WTC11 (cell line): ENCODE measurements at regions of chr2 and their contacts with region 1.

Region 1: DNA sequence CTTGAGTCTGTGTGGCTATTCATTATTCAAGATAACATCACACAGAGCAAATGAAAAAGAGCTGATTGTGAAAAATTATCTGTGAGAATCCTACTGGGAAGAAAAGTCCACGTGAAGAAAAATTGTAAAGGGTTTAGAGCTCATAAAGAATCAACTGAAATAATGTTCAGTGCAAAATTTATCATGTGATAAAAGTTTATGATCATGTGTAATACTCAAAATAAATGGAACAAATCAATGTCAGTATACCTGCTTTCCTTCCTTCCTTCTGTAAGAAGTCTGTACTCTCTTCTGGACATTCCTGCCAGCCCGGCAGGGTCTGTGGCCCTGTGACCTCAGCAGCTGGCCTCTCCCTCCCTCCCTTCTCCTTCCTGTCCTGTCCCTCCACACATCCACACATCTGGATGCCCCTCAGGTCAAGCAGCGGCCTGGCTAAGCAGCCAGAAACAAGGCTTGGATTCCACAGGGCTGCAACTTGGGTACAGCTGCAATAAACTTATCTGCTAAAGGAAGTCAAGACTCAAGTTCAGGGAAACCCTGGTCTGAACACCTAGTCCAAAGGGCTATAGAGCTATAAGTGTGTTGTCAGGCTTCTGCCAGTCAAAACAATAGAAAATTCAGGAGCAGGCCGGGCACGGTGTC is 172.1 kb downstream of the MREG start:
- DNase-seq: no peak
- ATAC-seq: no peak
- H3K4me3 Mint-ChIP-seq: no peak overlapping the region
- H3K27ac Mint-ChIP-seq: no peak overlapping the region
- H3K4me1 Mint-ChIP-seq: peaks cover 6% of the 10 kb centered on the region
- H3K27me3 Mint-ChIP-seq: no peaks in the 10 kb centered on the region
- CTCF ChIP-seq: no peak

Region 2: DNA sequence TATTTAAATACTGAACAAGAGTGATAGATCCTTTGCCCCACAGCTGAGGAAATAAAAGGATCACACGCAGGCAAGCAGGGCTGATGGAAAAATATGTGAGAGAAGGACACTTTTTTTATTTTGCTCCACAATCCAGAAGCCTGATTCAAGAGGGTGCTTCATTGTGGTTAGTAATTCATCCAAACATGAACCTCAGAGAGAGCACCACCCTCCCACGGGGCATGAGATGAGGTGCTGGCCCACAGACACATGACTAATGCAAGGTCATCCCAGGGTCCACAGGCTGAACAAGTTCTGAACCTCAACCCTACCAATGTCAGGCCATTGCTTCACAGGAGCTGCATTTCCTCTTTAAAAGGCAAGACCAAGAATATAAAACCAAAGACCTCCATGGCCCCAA is 67.6 kb before region 1 on chr2:
- CTCF ChIA-PET with region 1: no interaction called
- POLR2A ChIA-PET with region 1: no interaction called
- DNase-seq: no peak
- ATAC-seq: no peak
- H3K4me3 Mint-ChIP-seq: no peak overlapping the region
- H3K27ac Mint-ChIP-seq: no peak overlapping the region
- H3K4me1 Mint-ChIP-seq: peaks cover 26% of the 10 kb centered on the region
- H3K27me3 Mint-ChIP-seq: peaks cover 6% of the 10 kb centered on the region
- CTCF ChIP-seq: no peak

Region 3: DNA sequence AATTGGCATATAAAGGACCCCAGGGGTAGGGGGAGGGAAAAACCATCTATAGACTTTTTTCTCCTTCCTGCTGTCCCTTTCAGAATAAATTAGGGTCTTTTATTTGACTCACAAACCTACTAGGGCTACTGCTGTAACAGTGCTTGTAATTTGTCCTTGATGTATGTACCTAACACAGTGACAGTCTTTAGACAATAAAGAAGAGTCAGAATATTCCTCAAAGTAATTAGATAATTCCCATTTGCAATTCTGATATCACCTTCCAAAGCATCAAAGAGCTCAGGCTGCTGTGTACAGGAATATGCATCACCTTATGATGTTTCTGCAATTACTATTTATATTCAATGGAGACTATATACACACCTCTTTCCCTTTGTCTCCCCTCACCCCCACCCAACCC is 10.4 kb after region 1 on chr2:
- CTCF ChIA-PET with region 1: no interaction called
- POLR2A ChIA-PET with region 1: no interaction called
- DNase-seq: no peak
- ATAC-seq: no peak
- H3K4me3 Mint-ChIP-seq: no peak overlapping the region
- H3K27ac Mint-ChIP-seq: no peak overlapping the region
- H3K4me1 Mint-ChIP-seq: peaks cover 14% of the 10 kb centered on the region
- H3K27me3 Mint-ChIP-seq: no peaks in the 10 kb centered on the region; the same call in 1 of the 2 replicates
- CTCF ChIP-seq: no peak

Region 4: GRCh38 chr2:215870986-215871385 is 29.7 kb after region 1 on chr2:
- CTCF ChIA-PET with region 1: interaction called, 10 read pairs
- POLR2A ChIA-PET with region 1: no interaction called
- DNase-seq: peak; percentile 65
- ATAC-seq: peak; percentile 98
- H3K4me3 Mint-ChIP-seq: no peak overlapping the region
- H3K27ac Mint-ChIP-seq: no peak overlapping the region
- H3K4me1 Mint-ChIP-seq: peaks cover 12% of the 10 kb centered on the region
- H3K27me3 Mint-ChIP-seq: no peaks in the 10 kb centered on the region
- CTCF ChIP-seq: peak; percentile 48; the same call in 1 of the 2 replicates